CD4-positive, alpha-beta memory T cell (primary cell): ENCODE measurements at regions of chr18 and their contacts with region 1.

Region 1: GRCh38 chr18:27636576-27637085 is 451.5 kb upstream of the CHST9 start:
- DNase-seq: no peak
- H3K4me3 ChIP-seq: no peak overlapping the region
- H3K4me3 Mint-ChIP-seq: no peak overlapping the region
- H3K27ac ChIP-seq: no peak overlapping the region
- H3K27ac Mint-ChIP-seq: no peak overlapping the region
- H3K4me1 ChIP-seq: no peaks in the 10 kb centered on the region
- H3K4me1 Mint-ChIP-seq: no peaks in the 10 kb centered on the region
- H3K27me3 ChIP-seq: no peaks in the 10 kb centered on the region
- H3K27me3 Mint-ChIP-seq: no peaks in the 10 kb centered on the region

Region 2: GRCh38 chr18:27577752-27578151 is 58.9 kb before region 1 on chr18:
- CTCF ChIA-PET with region 1: no interaction called
- POLR2A ChIA-PET with region 1: no interaction called
- intact Hi-C with region 1: loop called (anchors 10 kb)
- DNase-seq: no peak
- H3K4me3 ChIP-seq: no peak overlapping the region
- H3K4me3 Mint-ChIP-seq: no peak overlapping the region
- H3K27ac ChIP-seq: no peak overlapping the region
- H3K27ac Mint-ChIP-seq: no peak overlapping the region
- H3K4me1 ChIP-seq: no peaks in the 10 kb centered on the region
- H3K4me1 Mint-ChIP-seq: no peaks in the 10 kb centered on the region
- H3K27me3 ChIP-seq: no peaks in the 10 kb centered on the region
- H3K27me3 Mint-ChIP-seq: no peaks in the 10 kb centered on the region

Region 3: DNA sequence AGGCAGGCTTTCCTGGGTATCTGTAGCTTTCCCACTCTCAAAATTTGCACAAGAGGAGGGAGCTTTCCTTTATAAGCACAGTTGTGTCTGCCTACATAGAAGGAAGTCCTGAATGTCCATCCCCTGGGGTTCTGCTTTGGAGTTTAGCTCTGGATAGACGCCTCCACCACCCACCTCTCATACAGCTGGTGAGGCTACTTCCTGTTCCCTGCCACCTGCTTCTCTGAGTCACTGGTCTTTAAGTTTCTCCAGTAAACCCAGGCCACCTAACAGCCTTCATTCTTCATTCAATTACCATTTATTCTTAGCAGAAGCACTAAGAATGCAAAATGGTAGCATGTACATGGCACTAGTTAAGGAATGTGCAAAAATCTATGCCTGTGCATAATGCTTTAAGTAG is 132.5 kb after region 1 on chr18:
- CTCF ChIA-PET with region 1: no interaction called
- POLR2A ChIA-PET with region 1: no interaction called
- intact Hi-C with region 1: no loop called
- DNase-seq: no peak
- H3K4me3 ChIP-seq: no peak overlapping the region
- H3K4me3 Mint-ChIP-seq: no peak overlapping the region
- H3K27ac ChIP-seq: no peak overlapping the region
- H3K27ac Mint-ChIP-seq: no peak overlapping the region
- H3K4me1 ChIP-seq: no peaks in the 10 kb centered on the region
- H3K4me1 Mint-ChIP-seq: no peaks in the 10 kb centered on the region
- H3K27me3 ChIP-seq: no peaks in the 10 kb centered on the region
- H3K27me3 Mint-ChIP-seq: no peaks in the 10 kb centered on the region

Region 4: DNA sequence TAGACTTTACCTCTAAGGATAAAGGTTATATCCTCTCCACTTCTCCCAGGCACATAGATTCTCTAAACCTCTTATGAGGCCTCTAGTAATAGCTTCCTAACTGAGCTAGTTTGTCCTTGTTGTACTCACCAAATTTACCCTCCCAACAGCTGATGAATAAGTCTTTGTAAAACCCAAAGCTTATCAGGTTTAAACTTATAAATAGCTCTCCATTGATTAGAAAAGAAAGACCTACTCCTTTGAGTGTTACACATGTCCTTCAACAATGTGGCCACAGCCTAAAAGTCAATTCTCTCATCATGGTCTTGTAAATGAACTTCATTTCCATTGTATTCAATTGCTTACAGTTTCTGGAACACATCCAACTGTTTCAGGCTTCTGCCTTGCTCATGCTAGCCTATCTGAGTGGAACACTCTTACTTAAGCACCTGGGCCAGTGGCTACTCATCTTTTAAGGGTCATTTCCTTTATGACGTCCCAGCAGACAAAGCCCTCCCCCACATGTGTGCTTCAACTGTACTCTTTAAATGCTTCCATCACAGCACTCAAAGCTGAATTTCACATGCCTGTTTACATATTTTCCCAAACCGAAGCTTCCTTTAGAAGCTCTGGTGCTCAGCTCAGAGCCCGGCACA is 408.7 kb after region 1 on chr18:
- CTCF ChIA-PET with region 1: no interaction called
- POLR2A ChIA-PET with region 1: no interaction called
- intact Hi-C with region 1: no loop called
- DNase-seq: no peak
- H3K4me3 ChIP-seq: no peak overlapping the region
- H3K4me3 Mint-ChIP-seq: no peak overlapping the region
- H3K27ac ChIP-seq: no peak overlapping the region
- H3K27ac Mint-ChIP-seq: no peak overlapping the region
- H3K4me1 ChIP-seq: no peaks in the 10 kb centered on the region
- H3K4me1 Mint-ChIP-seq: no peaks in the 10 kb centered on the region
- H3K27me3 ChIP-seq: no peaks in the 10 kb centered on the region
- H3K27me3 Mint-ChIP-seq: no peaks in the 10 kb centered on the region